ENCODE measurements at regions of chr7 and their contacts with region 1.

Region 1: GRCh38 chr7:101153969-101154692 is at the start of gene AP1S1:
- DNase-seq: peak; percentile 92
- ATAC-seq: peak; percentile 96
- H3K4me3 ChIP-seq: peak within 1 kb of the TSS; percentile 84
- H3K27ac ChIP-seq: peak within 1 kb of the TSS; percentile 75
- H3K4me1 ChIP-seq: peaks cover 2% of the 10 kb centered on the region; the same call in 1 of the 2 replicates
- H3K27me3 ChIP-seq: peaks cover 4% of the 10 kb centered on the region
- CTCF ChIP-seq: no peak
- POLR2A ChIP-seq: no peak
- RAD21 ChIP-seq: no peak
- total RNA-seq, gene AP1S1: 233 and 295 TPM in 2 replicates

Region 2: DNA sequence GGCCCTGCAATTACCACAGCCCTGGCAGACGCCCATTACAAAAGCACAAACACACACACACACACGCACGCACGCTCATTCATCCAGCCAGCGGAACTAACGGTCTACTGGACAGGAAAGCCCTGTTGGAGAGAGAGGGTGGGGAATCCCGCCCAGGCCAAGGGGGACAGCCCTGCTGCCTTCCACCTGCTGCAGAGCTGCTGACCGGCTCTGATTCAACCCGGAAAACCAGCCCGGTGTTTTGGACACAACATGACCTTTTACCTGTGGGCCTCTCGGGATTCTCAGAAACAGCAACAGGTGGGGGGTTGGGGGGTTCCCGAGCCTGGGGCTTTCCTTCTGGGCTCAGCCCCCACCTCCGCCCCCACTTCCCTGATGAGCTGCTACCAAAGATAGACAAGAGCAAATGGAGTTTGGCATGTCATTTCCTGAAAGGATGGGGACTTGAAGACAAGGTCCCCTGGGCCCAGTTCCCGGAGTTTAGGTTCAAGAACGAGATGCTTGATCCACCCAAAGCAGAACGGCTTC is 45.7 kb before region 1 on chr7:
- CTCF ChIA-PET with region 1: no interaction called
- POLR2A ChIA-PET with region 1: interaction called, 11 read pairs
- dilution Hi-C with region 1: no loop called
- in situ Hi-C with region 1: no loop called
- intact Hi-C with region 1: no loop called
- DNase-seq: no peak
- ATAC-seq: no peak
- H3K4me3 ChIP-seq: no peak overlapping the region
- H3K27ac ChIP-seq: no peak overlapping the region
- H3K4me1 ChIP-seq: peaks cover 5% of the 10 kb centered on the region
- H3K27me3 ChIP-seq: no peaks in the 10 kb centered on the region
- CTCF ChIP-seq: no peak
- POLR2A ChIP-seq: no peak
- RAD21 ChIP-seq: no peak

Region 3: DNA sequence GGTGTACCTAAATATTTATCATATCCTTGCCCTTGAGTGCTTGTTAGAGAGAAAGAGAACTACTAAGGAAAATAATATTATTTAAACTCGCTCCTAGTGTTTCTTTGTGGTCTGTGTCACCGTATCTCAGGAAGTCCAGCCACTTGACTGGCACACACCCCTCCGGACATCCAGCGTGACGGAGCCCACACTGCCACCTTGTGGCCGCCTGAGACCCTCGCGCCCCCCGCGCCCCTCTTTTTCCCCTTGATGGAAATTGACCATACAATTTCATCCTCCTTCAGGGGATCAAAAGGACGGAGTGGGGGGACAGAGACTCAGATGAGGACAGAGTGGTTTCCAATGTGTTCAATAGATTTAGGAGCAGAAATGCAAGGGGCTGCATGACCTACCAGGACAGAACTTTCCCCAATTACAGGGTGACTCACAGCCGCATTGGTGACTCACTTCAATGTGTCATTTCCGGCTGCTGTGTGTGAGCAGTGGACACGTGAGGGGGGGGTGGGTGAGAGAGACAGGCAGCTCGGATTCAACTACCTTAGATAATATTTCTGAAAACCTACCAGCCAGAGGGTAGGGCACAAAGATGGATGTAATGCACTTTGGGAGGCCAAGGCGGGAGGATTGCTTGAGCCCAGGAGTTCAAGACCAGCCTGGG is 15.8 kb before region 1 on chr7:
- CTCF ChIA-PET with region 1: interaction called, 10 read pairs
- POLR2A ChIA-PET with region 1: no interaction called
- dilution Hi-C with region 1: no loop called
- in situ Hi-C with region 1: no loop called
- intact Hi-C with region 1: no loop called
- DNase-seq: peak; percentile 98
- ATAC-seq: peak; percentile 44
- H3K4me3 ChIP-seq: no peak overlapping the region
- H3K27ac ChIP-seq: peak overlapping the region; percentile 70
- H3K4me1 ChIP-seq: peaks cover 22% of the 10 kb centered on the region; the same call in 1 of the 2 replicates
- H3K27me3 ChIP-seq: no peaks in the 10 kb centered on the region
- CTCF ChIP-seq: peak; percentile 60
- POLR2A ChIP-seq: peak; percentile 77
- RAD21 ChIP-seq: peak; percentile 39; the same call in 1 of the 2 replicates

Region 4: GRCh38 chr7:101185258-101185839 is 31.2 kb after region 1 on chr7:
- CTCF ChIA-PET with region 1: no interaction called
- POLR2A ChIA-PET with region 1: interaction called, 5 read pairs
- dilution Hi-C with region 1: no loop called
- in situ Hi-C with region 1: loop called (anchors 5 kb)
- intact Hi-C with region 1: no loop called
- DNase-seq: peak; percentile 55
- ATAC-seq: peak; percentile 65
- H3K4me3 ChIP-seq: no peak overlapping the region
- H3K27ac ChIP-seq: no peak overlapping the region
- H3K4me1 ChIP-seq: no peaks in the 10 kb centered on the region
- H3K27me3 ChIP-seq: peaks cover 7% of the 10 kb centered on the region
- CTCF ChIP-seq: no peak
- POLR2A ChIP-seq: no peak
- RAD21 ChIP-seq: no peak

Region 5: DNA sequence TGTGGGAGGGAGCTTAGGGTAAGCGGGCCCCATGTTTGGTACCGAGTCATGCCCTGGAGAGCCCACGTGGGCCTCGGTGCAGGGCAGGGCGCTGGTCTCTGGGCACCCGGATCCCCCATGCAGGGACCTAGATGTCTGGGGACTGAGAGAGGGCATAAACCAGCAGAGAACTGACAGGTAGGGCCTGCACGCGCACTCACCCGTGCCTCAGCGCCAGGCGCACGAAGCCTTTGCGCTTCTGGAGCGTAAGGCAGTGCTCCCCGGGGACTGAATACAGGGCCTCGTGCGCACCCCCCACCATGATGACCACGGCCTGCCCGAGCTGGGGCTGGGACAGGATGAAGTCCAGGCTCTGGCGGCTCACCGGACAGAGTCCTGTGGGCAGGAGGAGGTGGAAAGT is 43.9 kb after region 1 on chr7:
- CTCF ChIA-PET with region 1: interaction called, 11 read pairs
- POLR2A ChIA-PET with region 1: no interaction called
- dilution Hi-C with region 1: no loop called
- in situ Hi-C with region 1: no loop called
- intact Hi-C with region 1: no loop called
- DNase-seq: no peak
- ATAC-seq: no peak
- H3K4me3 ChIP-seq: no peak overlapping the region
- H3K27ac ChIP-seq: no peak overlapping the region
- H3K4me1 ChIP-seq: no peaks in the 10 kb centered on the region
- H3K27me3 ChIP-seq: peaks cover 39% of the 10 kb centered on the region
- CTCF ChIP-seq: no peak
- POLR2A ChIP-seq: no peak
- RAD21 ChIP-seq: no peak

Region 6: DNA sequence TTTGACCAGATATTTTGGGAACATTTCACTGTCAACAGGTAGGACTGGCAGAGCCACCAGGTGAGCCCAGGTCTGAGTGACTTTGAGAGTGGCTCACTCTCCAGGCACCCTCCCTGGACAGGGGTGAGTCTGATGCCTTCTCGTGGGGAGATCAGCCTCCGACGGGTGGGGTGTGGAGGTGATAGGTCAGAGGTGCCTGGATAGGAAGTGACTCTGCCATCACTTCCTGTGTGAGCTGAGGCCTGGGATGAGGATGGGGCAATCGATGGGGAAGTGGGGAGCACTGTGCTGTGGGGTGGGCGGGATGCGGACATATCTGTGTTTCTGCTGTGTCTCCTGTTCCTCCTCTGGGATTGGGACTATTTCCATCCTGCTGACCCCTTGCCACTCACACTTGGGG is 132.9 kb after region 1 on chr7:
- CTCF ChIA-PET with region 1: interaction called, 8 read pairs
- POLR2A ChIA-PET with region 1: no interaction called
- dilution Hi-C with region 1: no loop called
- in situ Hi-C with region 1: loop called (anchors 5 kb)
- intact Hi-C with region 1: no loop called
- DNase-seq: no peak
- ATAC-seq: no peak
- H3K4me3 ChIP-seq: no peak overlapping the region
- H3K27ac ChIP-seq: no peak overlapping the region
- H3K4me1 ChIP-seq: no peaks in the 10 kb centered on the region
- H3K27me3 ChIP-seq: peaks cover 43% of the 10 kb centered on the region
- CTCF ChIP-seq: no peak
- POLR2A ChIP-seq: no peak
- RAD21 ChIP-seq: no peak

Measured in IMR-90 (cell line).